Posterior vena cava (tissue), 2 donors: ENCODE measurements at regions of chr2 and their contacts with region 1.

Region 1: GRCh38 chr2:204705243-204705932 is 160.1 kb downstream of the PARD3B start:
- DNase-seq: no peak

Region 2: GRCh38 chr2:204791230-204791629 is 85.8 kb after region 1 on chr2:
- intact Hi-C with region 1: loop called in 1 of 2 experiments (anchors 5 kb)
- DNase-seq: no peak